Activated CD4-positive, alpha-beta T cell treated with anti-CD3 and anti-CD28 coated beads for 36 hours (primary cell): ENCODE measurements at regions of chr5 and their contacts with region 1.

Region 1: GRCh38 chr5:150436141-150436680 is 13.3 kb downstream of the RPS14 start:
- DNase-seq: peak; percentile 95
- ATAC-seq: peak; percentile 98
- H3K4me3 Mint-ChIP-seq: no peak overlapping the region
- H3K27ac Mint-ChIP-seq: peak overlapping the region; percentile 75
- H3K4me1 Mint-ChIP-seq: peaks cover 8% of the 10 kb centered on the region
- H3K27me3 Mint-ChIP-seq: no peaks in the 10 kb centered on the region

Region 2: DNA sequence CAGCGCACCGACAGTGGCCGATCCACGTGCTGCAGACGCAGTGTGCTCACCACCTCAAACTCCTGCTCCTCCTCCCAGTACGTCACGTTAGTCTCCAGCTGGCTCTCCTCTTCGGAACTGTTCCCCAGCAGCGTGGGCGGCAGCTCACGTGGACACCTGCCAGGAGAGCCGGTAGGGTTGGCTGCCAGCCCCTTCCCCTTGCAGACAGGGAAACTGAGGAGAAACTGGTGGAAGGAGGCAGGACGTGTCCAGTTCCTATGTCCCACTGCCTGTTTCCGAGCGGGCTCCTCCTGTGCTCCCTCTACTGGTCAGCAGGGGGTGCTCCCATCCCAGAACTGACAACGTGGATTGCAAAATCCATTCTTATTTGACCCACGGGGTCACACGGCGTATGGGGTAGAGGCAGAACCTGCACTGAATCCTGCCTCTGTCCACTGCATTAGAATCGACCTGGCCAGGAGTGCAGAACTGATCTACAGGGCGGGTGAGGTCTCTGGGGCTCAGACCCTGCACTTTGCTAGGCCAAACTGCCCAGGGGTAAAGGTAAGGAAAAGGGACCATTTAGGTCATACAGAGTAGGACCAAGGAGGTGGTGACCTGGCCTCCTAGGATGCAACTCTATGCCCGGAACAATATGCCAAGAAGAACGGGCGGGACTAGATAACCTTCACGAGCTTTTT is 306.3 kb before region 1 on chr5:
- CTCF ChIA-PET with region 1: no interaction called
- POLR2A ChIA-PET with region 1: no interaction called
- intact Hi-C with region 1: loop called in 1 of 2 experiments (anchors 1 kb)
- DNase-seq: peak; percentile 71
- ATAC-seq: peak; percentile 92
- H3K4me3 Mint-ChIP-seq: no peak overlapping the region
- H3K27ac Mint-ChIP-seq: no peak overlapping the region
- H3K4me1 Mint-ChIP-seq: no peaks in the 10 kb centered on the region
- H3K27me3 Mint-ChIP-seq: no peaks in the 10 kb centered on the region

Region 3: DNA sequence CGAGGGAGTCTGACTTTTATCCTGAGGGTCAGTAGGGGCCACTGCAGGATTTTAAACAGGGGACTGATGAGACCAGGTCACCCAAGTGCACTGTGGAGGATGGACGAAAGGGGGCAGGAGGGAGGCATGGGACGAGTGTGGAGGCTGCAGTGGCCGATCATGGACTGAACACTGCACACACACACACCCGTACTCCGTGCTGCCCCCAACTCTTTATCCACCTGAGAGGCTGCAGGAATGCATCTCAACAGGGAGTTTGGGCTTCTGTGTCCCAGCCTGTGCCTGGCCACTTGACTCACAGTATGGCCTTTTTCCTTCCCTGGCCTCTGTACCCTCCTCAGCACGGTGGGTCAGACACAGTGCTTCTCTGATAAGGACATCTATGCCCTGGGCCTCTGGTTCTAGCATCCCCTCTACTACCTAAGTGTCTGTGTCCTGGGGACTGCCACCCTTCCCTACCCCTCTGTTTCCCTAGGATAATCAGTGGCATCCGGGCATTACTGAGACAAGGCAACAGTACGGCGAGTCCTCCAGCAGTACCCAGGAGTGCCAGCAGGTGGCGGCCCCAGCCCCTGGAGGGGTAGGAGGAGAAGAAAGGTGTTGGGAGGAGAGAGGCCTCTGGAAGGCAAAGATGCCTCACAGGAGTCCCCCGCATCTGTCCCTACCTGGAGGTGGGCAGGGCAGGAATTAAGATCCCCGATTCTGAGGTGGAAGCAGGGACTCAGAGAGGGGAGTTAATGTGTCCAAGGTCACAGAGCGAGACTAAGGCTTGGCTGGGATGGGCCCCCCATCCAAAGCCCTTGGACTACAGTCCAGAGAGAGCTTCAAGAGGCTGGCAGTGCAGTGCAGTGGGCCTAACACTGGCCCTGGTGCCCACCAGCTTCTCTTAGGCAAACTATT is 274.7 kb before region 1 on chr5:
- CTCF ChIA-PET with region 1: no interaction called
- POLR2A ChIA-PET with region 1: no interaction called
- intact Hi-C with region 1: loop called (anchors 1 kb)
- DNase-seq: peak; percentile 88
- ATAC-seq: peak; percentile 91
- H3K4me3 Mint-ChIP-seq: no peak overlapping the region
- H3K27ac Mint-ChIP-seq: no peak overlapping the region
- H3K4me1 Mint-ChIP-seq: no peaks in the 10 kb centered on the region
- H3K27me3 Mint-ChIP-seq: peaks cover 8% of the 10 kb centered on the region

Region 4: GRCh38 chr5:150217873-150218692 is 218.1 kb before region 1 on chr5:
- CTCF ChIA-PET with region 1: interaction called, 3 read pairs
- POLR2A ChIA-PET with region 1: no interaction called
- intact Hi-C with region 1: loop called in 1 of 2 experiments (anchors 1 kb)
- DNase-seq: peak; percentile 89
- ATAC-seq: peak; percentile 97
- H3K4me3 Mint-ChIP-seq: no peak overlapping the region
- H3K27ac Mint-ChIP-seq: no peak overlapping the region
- H3K4me1 Mint-ChIP-seq: no peaks in the 10 kb centered on the region
- H3K27me3 Mint-ChIP-seq: peaks cover 3% of the 10 kb centered on the region

Region 5: GRCh38 chr5:150272526-150272925 is 163.7 kb before region 1 on chr5:
- CTCF ChIA-PET with region 1: interaction called, 3 read pairs
- POLR2A ChIA-PET with region 1: no interaction called
- intact Hi-C with region 1: loop called (anchors 1 kb)
- DNase-seq: peak; percentile 15
- ATAC-seq: no peak
- H3K4me3 Mint-ChIP-seq: no peak overlapping the region
- H3K27ac Mint-ChIP-seq: no peak overlapping the region
- H3K4me1 Mint-ChIP-seq: no peaks in the 10 kb centered on the region
- H3K27me3 Mint-ChIP-seq: peaks cover 3% of the 10 kb centered on the region

Region 6: GRCh38 chr5:150398722-150399523 is 37.3 kb before region 1 on chr5:
- CTCF ChIA-PET with region 1: interaction called, 48 read pairs
- POLR2A ChIA-PET with region 1: no interaction called
- intact Hi-C with region 1: loop called (anchors 1 kb)
- DNase-seq: peak; percentile 38
- ATAC-seq: peak; percentile 56
- H3K4me3 Mint-ChIP-seq: no peak overlapping the region
- H3K27ac Mint-ChIP-seq: no peak overlapping the region
- H3K4me1 Mint-ChIP-seq: no peaks in the 10 kb centered on the region
- H3K27me3 Mint-ChIP-seq: no peaks in the 10 kb centered on the region

Region 7: GRCh38 chr5:150409638-150410523 is 26.3 kb before region 1 on chr5:
- CTCF ChIA-PET with region 1: interaction called, 9 read pairs
- POLR2A ChIA-PET with region 1: interaction called, 9 read pairs
- intact Hi-C with region 1: loop called (anchors 1 kb)
- DNase-seq: peak; percentile 66
- ATAC-seq: peak; percentile 40
- H3K4me3 Mint-ChIP-seq: peak overlapping the region; percentile 99
- H3K27ac Mint-ChIP-seq: peak overlapping the region; percentile 99
- H3K4me1 Mint-ChIP-seq: peaks cover 36% of the 10 kb centered on the region
- H3K27me3 Mint-ChIP-seq: no peaks in the 10 kb centered on the region

Region 8: DNA sequence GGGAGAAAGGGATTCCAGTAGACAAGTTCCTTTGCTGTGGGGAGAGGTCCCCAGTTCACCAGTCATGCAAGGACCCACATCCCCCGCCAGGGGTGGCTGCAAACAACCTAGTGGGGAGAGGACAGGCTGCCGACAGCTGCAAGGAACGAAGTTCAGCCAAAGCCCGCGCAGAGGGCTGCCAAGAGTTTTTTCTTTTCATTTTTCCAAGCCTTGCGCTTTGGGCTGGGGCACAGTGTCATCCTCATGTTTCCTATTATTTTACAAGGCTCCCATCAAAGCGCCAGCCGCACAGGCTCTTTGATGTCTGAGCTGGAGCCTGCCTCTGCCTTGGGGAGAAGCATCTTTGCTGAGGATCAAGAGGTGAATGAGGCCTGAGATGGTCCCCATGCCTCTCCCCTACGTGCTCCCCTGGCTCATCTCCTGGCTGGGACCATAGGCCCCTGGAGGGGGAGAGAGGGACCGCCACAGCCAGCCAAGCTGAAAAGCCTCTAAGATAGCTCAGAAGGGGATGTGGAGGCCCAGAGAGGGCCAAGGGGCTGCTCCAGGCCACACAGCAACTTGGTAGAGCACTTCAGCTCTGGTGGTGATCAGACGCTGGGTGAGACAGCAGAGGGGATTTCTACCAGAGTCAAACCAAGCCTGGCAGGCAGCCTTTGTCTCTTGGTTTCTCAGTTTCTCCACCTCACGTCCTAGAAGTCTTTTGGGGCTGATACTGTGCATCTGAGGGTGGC is 153.8 kb after region 1 on chr5:
- CTCF ChIA-PET with region 1: no interaction called
- POLR2A ChIA-PET with region 1: no interaction called
- intact Hi-C with region 1: no loop called
- DNase-seq: no peak
- ATAC-seq: no peak
- H3K4me3 Mint-ChIP-seq: no peak overlapping the region
- H3K27ac Mint-ChIP-seq: no peak overlapping the region
- H3K4me1 Mint-ChIP-seq: no peaks in the 10 kb centered on the region
- H3K27me3 Mint-ChIP-seq: no peaks in the 10 kb centered on the region